ENCODE measurements at regions of chr9 and their contacts with region 1.

Region 1: DNA sequence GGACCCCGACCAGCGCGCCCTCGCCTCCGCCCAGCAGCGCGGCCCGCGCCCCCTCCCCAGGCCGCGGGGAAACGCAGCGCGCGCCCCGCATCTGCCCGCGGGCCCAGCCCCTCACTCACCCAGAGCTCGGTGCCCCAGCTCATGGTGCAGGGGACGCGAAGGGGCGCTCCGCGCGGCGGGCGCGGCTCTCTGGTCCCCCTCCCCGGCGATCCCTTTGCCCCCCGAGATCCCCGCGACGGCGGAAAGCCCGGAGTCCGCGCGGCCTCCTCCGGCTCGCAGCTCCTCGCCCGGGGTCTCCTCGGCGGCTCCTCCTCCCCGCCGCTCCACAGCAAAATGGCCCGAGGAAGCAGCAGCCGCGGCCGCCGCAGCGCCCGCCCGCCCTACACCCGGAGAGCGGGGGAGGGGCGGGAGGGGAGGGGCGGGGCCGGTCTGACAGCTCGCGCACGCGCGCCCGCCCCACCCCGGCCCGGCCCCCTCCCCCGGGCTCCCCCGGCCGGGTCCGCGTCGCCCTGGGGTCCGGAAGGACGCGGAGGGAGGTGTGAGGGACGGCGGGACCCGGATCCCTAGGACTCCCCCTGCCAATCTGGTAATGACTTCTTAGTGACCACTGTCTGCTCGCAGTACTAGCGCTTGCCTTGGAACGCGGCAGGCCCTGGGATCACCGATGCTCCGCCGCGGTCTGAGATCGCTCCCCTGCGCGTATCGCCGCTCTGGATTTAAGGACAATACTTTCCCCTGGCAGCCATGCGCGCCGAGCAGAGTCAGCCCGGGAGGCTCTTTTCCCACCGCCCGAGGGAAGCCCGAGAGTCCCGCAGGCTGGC is at the start of gene FNBP1:
- DNase-seq: peak; percentile 68 to 76 (median 71)
- H3K4me3 ChIP-seq: peak within 1 kb of the TSS; percentile 92 to 97 (median 96)
- H3K4me3 Mint-ChIP-seq: peak within 1 kb of the TSS; percentile 100
- H3K27ac ChIP-seq: peak within 1 kb of the TSS; percentile 85 to 90
- H3K27ac Mint-ChIP-seq: peak within 1 kb of the TSS; percentile 94 to 100 (median 96)
- H3K4me1 ChIP-seq: peaks cover 64 to 77% of the 10 kb centered on the region in 2 donors
- H3K4me1 Mint-ChIP-seq: peaks cover 58% of the 10 kb centered on the region
- H3K27me3 ChIP-seq: no peaks in the 10 kb centered on the region
- H3K27me3 Mint-ChIP-seq: no peaks in the 10 kb centered on the region
- CTCF ChIP-seq: no peak
- polyA plus RNA-seq, gene FNBP1: 37.6 to 60.7 (median 51.4) TPM

Region 2: DNA sequence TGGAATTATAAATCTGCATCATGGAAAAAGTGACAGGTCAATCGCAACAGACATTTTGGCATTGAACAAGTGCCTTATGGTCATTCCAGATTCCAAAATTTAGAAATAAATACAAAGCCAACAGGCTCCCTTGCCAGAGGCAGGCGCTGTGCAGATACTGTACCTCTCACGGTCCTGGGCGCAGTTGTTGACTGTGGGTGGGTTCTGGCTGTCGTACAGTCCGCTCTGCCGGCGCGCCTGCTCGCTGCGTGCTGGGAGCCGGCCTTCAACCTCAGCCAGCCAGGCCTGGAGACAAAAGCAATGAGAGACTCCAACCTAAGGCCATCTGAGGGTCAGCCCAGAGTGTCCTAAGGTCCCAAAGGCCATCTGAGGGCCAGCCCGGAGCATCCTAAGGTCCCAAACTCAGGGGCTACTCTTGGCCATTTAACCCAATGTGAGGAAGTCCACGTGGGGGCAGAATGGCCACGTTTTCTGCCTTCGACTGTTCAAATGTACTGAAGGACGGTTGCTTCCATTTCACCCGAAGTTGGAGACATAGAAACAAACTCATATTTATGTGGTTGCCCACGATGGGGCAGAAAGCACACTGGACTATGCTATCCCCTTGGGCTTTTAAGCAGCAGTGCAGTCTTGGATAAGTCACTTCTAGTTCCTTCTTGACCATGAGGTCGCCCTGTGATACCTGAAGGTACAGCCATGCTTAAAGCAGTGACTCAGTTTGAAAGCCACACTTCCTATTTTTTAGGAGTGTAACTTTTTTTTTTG is 142.6 kb before region 1 on chr9:
- intact Hi-C with region 1: no loop called
- DNase-seq: peak; percentile 58 to 84 (median 68)
- H3K4me3 ChIP-seq: no peak overlapping the region
- H3K4me3 Mint-ChIP-seq: no peak overlapping the region
- H3K27ac ChIP-seq: peak overlapping the region; percentile 59 to 79
- H3K27ac Mint-ChIP-seq: peak overlapping the region; percentile 44 to 83 (median 78)
- H3K4me1 ChIP-seq: peaks cover 21 to 26% of the 10 kb centered on the region in 2 donors
- H3K4me1 Mint-ChIP-seq: peaks cover 20% of the 10 kb centered on the region
- H3K27me3 ChIP-seq: no peaks in the 10 kb centered on the region
- H3K27me3 Mint-ChIP-seq: peaks cover 0 to 3% (median 1%) of the 10 kb centered on the region in 3 donors
- CTCF ChIP-seq: no peak

Region 3: GRCh38 chr9:129954868-129955550 is 88.0 kb before region 1 on chr9:
- intact Hi-C with region 1: loop called (anchors 5 to 10 kb)
- DNase-seq: peak; percentile 72 to 86 (median 82)
- H3K4me3 ChIP-seq: peak overlapping the region in 1 of 3 experiments; percentile 55
- H3K4me3 Mint-ChIP-seq: peak overlapping the region; percentile 69 to 74
- H3K27ac ChIP-seq: peak overlapping the region; percentile 73 to 79
- H3K27ac Mint-ChIP-seq: peak overlapping the region; percentile 86 to 96 (median 92)
- H3K4me1 ChIP-seq: peaks cover 42 to 56% of the 10 kb centered on the region in 2 donors
- H3K4me1 Mint-ChIP-seq: peaks cover 44% of the 10 kb centered on the region
- H3K27me3 ChIP-seq: no peaks in the 10 kb centered on the region
- H3K27me3 Mint-ChIP-seq: peaks cover 0 to 2% (median 0%) of the 10 kb centered on the region in 3 donors
- CTCF ChIP-seq: no peak

Region 4: GRCh38 chr9:129962889-129963703 is 79.9 kb before region 1 on chr9:
- intact Hi-C with region 1: loop called in 1 of 2 experiments (anchors 10 kb)
- DNase-seq: peak; percentile 65 to 70 (median 67)
- H3K4me3 ChIP-seq: peak overlapping the region; percentile 46 to 87 (median 51)
- H3K4me3 Mint-ChIP-seq: peak overlapping the region; percentile 79 to 89
- H3K27ac ChIP-seq: peak overlapping the region; percentile 91 to 98
- H3K27ac Mint-ChIP-seq: peak overlapping the region; percentile 94 to 98 (median 95)
- H3K4me1 ChIP-seq: peaks cover 56 to 76% of the 10 kb centered on the region in 2 donors
- H3K4me1 Mint-ChIP-seq: peaks cover 72% of the 10 kb centered on the region
- H3K27me3 ChIP-seq: no peaks in the 10 kb centered on the region
- H3K27me3 Mint-ChIP-seq: peaks cover 0 to 2% (median 0%) of the 10 kb centered on the region in 3 donors
- CTCF ChIP-seq: no peak

Region 5: DNA sequence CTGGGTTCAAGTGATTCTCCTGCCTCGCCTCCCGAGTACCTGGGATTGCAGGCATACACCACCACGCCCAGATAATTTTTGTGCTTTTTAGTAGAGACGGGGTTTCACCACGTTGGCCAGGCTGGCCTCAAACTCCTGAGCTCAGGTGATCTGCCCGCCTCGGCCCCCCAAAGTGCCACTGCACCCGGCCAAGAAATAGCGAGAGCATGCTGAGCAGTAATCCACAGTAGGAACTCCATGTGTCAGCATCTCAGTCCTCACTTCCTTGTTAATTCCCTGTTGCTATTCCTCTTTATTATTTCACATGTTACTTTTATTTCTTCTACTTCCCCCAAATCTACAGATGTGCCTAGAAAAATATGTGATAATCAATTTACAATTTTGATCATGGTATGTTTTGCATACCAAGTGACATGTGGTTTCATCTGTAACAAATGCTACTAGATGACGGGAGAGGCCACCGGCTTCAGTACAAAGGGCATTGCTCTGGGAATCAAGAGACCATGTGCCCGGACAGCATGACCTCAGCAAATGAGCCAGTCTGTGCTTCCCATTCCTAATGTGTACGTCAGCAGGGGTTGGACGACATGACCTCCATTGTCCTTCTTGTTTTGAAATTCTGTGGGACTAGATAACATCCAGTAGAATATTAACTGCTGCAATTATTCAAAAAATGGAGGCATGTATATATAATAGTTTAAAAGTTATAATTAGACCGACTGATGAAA is 61.7 kb before region 1 on chr9:
- intact Hi-C with region 1: no loop called
- DNase-seq: no peak
- H3K4me3 ChIP-seq: no peak overlapping the region
- H3K4me3 Mint-ChIP-seq: no peak overlapping the region
- H3K27ac ChIP-seq: peak overlapping the region in 1 of 2 donors; percentile 33
- H3K27ac Mint-ChIP-seq: peak overlapping the region; percentile 55 to 89 (median 73)
- H3K4me1 ChIP-seq: peaks cover 0 to 6% of the 10 kb centered on the region in 2 donors
- H3K4me1 Mint-ChIP-seq: peaks cover 16% of the 10 kb centered on the region
- H3K27me3 ChIP-seq: no peaks in the 10 kb centered on the region
- H3K27me3 Mint-ChIP-seq: no peaks in the 10 kb centered on the region
- CTCF ChIP-seq: no peak

Measured in CD14-positive monocyte (primary cell).